Astrocyte of the cerebellum (primary cell): ENCODE measurements at regions of chr5 and their contacts with region 1.

Region 1: GRCh38 chr5:1524799-1525615 is 1.2 kb upstream of the LPCAT1 start:
- DNase-seq: no peak
- H3K4me3 ChIP-seq: no peak overlapping the region
- CTCF ChIP-seq: no peak

Region 2: DNA sequence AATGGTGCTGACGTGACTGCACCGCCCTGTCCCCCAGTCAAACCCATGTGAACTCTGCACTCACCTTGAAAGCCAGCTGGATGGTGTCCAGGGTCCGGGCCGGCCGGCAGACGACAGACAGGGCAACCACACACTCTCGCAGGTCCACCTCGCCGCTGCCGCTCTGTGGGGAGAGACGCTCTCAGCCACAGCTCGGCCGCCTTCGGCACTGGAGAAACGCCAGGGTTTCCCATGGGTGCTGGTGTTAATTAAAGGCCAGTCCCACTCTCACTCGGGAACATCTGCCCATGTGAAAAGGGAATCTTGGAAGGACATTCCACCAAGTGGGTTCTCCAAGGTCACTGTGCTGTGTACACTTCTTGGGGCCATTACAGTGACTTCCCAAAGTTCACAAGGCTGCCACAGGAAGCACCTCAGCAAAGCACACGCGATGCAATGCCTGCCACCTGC is 54.2 kb before region 1 on chr5:
- in situ Hi-C with region 1: loop called (anchors 5 kb)
- DNase-seq: no peak
- H3K4me3 ChIP-seq: no peak overlapping the region
- CTCF ChIP-seq: no peak

Region 3: GRCh38 chr5:1594357-1595106 is 69.5 kb after region 1 on chr5:
- in situ Hi-C with region 1: no loop called
- DNase-seq: no peak
- H3K4me3 ChIP-seq: peak overlapping the region; percentile 42
- CTCF ChIP-seq: no peak